ENCODE measurements at regions of chr1 and their contacts with region 1.

Region 1: GRCh38 chr1:109532365-109533136 is 7.1 kb upstream of the GPR61 start:
- DNase-seq: no peak
- H3K4me3 ChIP-seq: no peak overlapping the region
- H3K27me3 ChIP-seq: no peaks in the 10 kb centered on the region; the same call in 1 of the 2 replicates
- CTCF ChIP-seq: peak; percentile 96

Region 2: DNA sequence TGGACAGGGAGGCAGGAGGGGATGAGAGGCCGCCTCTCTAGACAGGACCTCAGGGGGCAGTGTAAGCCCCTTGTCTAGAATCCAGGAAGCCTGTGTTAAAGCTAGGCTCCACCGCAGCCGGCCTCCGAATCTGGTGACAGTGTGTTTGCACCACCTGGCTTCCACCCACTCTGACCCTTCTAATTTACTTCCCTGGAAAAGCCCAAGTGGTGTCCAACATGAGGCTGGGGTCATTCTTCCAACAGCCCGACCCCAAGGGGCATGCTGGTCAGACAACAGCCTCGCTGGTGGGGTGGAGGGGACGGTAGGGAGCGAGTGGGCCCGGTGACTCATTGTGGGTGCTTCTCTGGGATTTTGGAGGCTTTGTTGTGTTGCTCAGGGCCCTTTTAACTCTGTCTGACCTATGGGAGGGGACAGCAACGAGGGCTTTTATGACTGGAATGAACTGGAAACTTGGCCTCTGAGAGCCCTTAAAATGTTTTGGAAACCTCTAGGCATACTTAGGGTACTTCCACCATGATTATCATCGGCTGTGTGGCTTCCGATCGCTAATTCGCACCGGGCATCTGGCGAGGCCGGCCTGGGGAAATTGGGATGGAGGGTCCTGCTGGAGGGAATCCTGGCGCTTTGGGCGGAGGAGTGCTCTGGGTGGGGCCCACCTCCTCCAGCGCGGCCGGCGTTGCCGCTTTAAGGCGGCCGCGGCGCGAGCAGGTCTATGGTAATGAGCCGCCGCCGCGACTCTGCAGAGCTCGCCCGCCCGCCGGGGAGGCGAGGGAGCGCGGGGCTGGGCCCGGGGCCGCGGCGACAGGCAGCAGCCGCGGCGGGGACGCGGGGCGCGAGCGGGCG is 283.5 kb before region 1 on chr1 and contains the start of gene CELSR2:
- CTCF ChIA-PET with region 1: interaction called, 16 read pairs
- POLR2A ChIA-PET with region 1: no interaction called
- DNase-seq: no peak
- H3K4me3 ChIP-seq: peak within 1 kb of the TSS; percentile 42
- H3K27me3 ChIP-seq: no peaks in the 10 kb centered on the region
- CTCF ChIP-seq: no peak
- polyA plus RNA-seq, gene CELSR2: 0.82 and 0.98 TPM in 2 replicates

Region 3: DNA sequence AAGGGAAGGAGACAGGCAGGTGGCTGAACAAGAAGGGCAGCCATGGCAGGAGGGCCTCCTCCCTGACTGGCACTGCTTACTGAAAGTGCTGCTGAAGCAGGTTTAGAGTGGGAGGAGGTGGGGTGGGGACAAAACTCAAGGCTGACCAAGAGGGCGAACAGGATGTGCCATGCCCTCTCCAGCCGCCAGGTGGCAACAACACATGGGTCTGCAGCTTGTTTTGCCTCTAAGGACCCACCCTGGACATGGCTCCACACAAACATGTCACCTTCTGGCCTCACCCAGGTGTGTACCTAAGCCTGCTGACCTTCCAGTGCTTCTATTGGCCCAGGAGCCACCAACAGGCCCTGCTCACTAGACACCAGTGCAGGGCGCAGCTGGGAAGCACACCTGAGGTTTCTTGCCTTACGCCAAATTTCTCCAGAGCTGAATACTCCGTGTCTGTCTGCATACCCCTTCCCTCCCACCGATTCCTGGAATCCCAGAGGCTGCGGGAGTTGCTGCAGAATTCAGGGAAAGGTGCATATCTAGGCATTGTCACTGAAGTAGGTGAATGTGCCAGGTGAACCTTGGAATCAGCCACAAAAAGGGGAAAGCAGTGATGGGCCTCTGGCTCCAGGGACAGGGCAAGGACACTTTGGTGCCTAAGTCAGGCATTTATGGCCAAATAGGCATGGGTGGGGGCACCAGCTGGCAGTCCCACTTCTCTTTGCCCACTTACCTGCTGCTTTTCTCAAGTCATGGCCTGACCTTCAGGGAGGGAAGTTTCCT is 254.9 kb before region 1 on chr1:
- CTCF ChIA-PET with region 1: interaction called, 47 read pairs
- POLR2A ChIA-PET with region 1: no interaction called
- DNase-seq: no peak
- H3K4me3 ChIP-seq: no peak overlapping the region
- H3K27me3 ChIP-seq: no peaks in the 10 kb centered on the region
- CTCF ChIP-seq: peak; percentile 93

Region 4: GRCh38 chr1:109412551-109412950 is 120.0 kb before region 1 on chr1:
- CTCF ChIA-PET with region 1: interaction called, 25 read pairs
- POLR2A ChIA-PET with region 1: no interaction called
- DNase-seq: no peak
- H3K4me3 ChIP-seq: no peak overlapping the region
- H3K27me3 ChIP-seq: no peaks in the 10 kb centered on the region
- CTCF ChIP-seq: no peak

Region 5: GRCh38 chr1:109483672-109484518 is 48.7 kb before region 1 on chr1 and contains the start of gene ATXN7L2:
- CTCF ChIA-PET with region 1: interaction called, 1,371 read pairs
- POLR2A ChIA-PET with region 1: no interaction called
- DNase-seq: peak; percentile 47
- H3K4me3 ChIP-seq: peak within 1 kb of the TSS; percentile 65
- H3K27me3 ChIP-seq: no peaks in the 10 kb centered on the region
- CTCF ChIP-seq: no peak
- polyA plus RNA-seq, gene ATXN7L2: 5.7 and 8.7 TPM in 2 replicates

Region 6: GRCh38 chr1:109516872-109517271 is 15.7 kb before region 1 on chr1:
- CTCF ChIA-PET with region 1: interaction called, 1,371 read pairs
- POLR2A ChIA-PET with region 1: interaction called, 3 read pairs
- DNase-seq: peak; percentile 75
- H3K4me3 ChIP-seq: no peak overlapping the region
- H3K27me3 ChIP-seq: no peaks in the 10 kb centered on the region
- CTCF ChIP-seq: no peak